CD4-positive, alpha-beta T cell (primary cell): ENCODE measurements at regions of chr9 and their contacts with region 1.

Region 1: DNA sequence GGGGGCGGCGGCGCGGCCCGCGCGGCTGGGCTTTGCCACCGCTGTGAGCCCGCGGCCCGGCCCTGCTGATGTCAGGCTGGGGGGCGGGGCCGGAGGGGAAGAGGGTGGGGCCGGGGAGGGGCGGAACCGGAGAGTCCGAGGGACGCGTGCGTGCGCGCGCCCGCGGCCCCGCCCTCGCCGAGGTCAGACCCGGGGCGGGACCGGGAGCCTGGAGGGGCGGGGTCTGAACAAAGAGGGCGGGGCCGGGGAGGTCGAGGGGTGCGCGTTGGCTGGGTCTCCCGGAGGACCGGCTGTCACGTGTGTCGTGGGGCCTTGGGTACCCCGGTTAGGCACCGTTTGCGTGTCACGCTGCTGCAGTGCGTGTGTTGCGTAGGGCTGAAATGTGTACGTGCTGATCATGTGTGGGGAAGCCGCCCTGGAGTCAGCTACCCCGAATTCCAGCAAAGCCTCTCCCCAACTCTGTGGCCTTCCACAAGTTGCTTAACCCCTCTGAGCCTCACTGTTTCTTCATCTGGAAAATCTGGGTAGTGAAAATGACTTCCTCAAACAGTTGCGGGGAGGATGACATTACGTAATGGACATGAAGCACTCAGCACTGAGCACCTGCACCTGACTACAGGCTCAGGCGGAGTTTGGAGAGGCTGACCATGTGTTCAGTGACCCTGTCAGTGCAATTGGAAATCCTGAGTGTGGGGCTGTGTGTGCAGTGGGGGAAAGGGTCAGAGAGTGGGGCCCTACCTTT is at the start of gene RALGDS:
- DNase-seq: peak; percentile 83 to 97 (median 90)
- ATAC-seq: peak; percentile 75
- H3K4me3 ChIP-seq: peak within 1 kb of the TSS; percentile 56
- H3K4me3 Mint-ChIP-seq: peak within 1 kb of the TSS; percentile 85
- H3K27ac ChIP-seq: peak within 1 kb of the TSS; percentile 75 to 98
- H3K27ac Mint-ChIP-seq: peak within 1 kb of the TSS; percentile 96
- H3K4me1 ChIP-seq: peaks cover 90% of the 10 kb centered on the region
- H3K4me1 Mint-ChIP-seq: peaks cover 61% of the 10 kb centered on the region
- H3K27me3 ChIP-seq: no peaks in the 10 kb centered on the region
- H3K27me3 Mint-ChIP-seq: no peaks in the 10 kb centered on the region
- CTCF ChIP-seq: no peak
- total RNA-seq, gene RALGDS: 166 to 168 TPM

Region 2: GRCh38 chr9:132354637-132355355 is 766.6 kb before region 1 on chr9 and contains the start of gene SETX:
- CTCF ChIA-PET with region 1: no interaction called
- POLR2A ChIA-PET with region 1: no interaction called
- intact Hi-C with region 1: loop called in 1 of 2 experiments (anchors 5 kb)
- DNase-seq: peak; percentile 88 to 99 (median 96)
- ATAC-seq: peak; percentile 82
- H3K4me3 ChIP-seq: peak within 1 kb of the TSS; percentile 74
- H3K4me3 Mint-ChIP-seq: peak within 1 kb of the TSS; percentile 94
- H3K27ac ChIP-seq: peak within 1 kb of the TSS; percentile 91 to 96
- H3K27ac Mint-ChIP-seq: peak within 1 kb of the TSS; percentile 91
- H3K4me1 ChIP-seq: peaks cover 41% of the 10 kb centered on the region
- H3K4me1 Mint-ChIP-seq: peaks cover 47% of the 10 kb centered on the region
- H3K27me3 ChIP-seq: no peaks in the 10 kb centered on the region
- H3K27me3 Mint-ChIP-seq: no peaks in the 10 kb centered on the region
- CTCF ChIP-seq: no peak
- total RNA-seq, gene SETX: 36.1 to 37.7 TPM

Region 3: DNA sequence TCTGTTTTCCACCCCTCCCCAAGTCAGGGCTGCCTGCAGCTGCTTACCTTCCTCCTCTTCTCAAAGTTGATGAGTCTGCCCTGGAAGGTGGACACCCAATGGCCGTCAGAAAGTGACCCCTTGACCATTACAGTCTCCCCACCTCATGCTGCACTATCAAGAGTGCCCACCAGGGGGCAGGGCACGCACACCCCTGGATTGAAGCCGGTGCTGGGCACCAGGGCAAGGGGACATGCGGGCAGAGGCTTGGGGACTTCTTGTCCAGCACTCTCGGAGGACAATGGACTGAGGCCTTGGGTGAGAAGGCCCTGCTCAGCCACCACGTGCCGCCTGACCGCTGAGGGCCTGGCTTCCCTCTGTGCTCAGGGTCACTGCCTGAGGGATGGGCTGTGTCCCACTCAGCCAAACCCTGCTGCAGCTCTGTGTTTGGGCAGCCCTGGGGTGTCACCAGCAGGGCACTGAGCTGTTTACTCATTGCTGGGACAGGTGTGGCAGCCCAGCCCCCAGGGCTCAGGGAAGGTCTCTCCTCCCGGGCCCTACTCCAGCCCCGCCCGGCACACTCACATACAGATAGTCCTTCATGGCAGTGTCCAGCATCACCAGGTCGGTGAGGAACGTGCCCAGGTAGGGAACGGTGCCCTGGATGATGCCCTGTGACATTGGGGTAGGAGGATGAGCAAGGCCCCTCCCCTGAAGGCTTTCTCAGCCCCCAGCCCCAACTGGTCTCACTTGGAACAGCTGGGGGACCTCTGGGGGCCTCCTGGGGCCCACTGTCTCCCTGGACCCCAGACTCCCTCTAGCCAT is 18.0 kb before region 1 on chr9:
- CTCF ChIA-PET with region 1: interaction called, 3 read pairs
- POLR2A ChIA-PET with region 1: interaction called, 3 read pairs
- intact Hi-C with region 1: loop called in 1 of 2 experiments (anchors 2 kb)
- DNase-seq: peak; percentile 38 to 76 (median 50)
- ATAC-seq: peak; percentile 50
- H3K4me3 ChIP-seq: no peak overlapping the region
- H3K4me3 Mint-ChIP-seq: peak overlapping the region; percentile 11
- H3K27ac ChIP-seq: peak overlapping the region in 1 of 2 donors; percentile 19
- H3K27ac Mint-ChIP-seq: peak overlapping the region; percentile 51
- H3K4me1 ChIP-seq: no peaks in the 10 kb centered on the region
- H3K4me1 Mint-ChIP-seq: no peaks in the 10 kb centered on the region
- H3K27me3 ChIP-seq: no peaks in the 10 kb centered on the region
- H3K27me3 Mint-ChIP-seq: no peaks in the 10 kb centered on the region
- CTCF ChIP-seq: peak; percentile 96

Region 4: GRCh38 chr9:133133681-133134418 is 12.5 kb after region 1 on chr9:
- CTCF ChIA-PET with region 1: interaction called, 3 read pairs
- POLR2A ChIA-PET with region 1: interaction called, 26 read pairs
- intact Hi-C with region 1: loop called (anchors 1 kb)
- DNase-seq: peak; percentile 83 to 98 (median 88)
- ATAC-seq: peak; percentile 80
- H3K4me3 ChIP-seq: peak overlapping the region; percentile 20
- H3K4me3 Mint-ChIP-seq: peak overlapping the region; percentile 87
- H3K27ac ChIP-seq: peak overlapping the region; percentile 98
- H3K27ac Mint-ChIP-seq: peak overlapping the region; percentile 99
- H3K4me1 ChIP-seq: peaks cover 100% of the 10 kb centered on the region
- H3K4me1 Mint-ChIP-seq: peaks cover 70% of the 10 kb centered on the region
- H3K27me3 ChIP-seq: no peaks in the 10 kb centered on the region
- H3K27me3 Mint-ChIP-seq: no peaks in the 10 kb centered on the region
- CTCF ChIP-seq: peak; percentile 9

Region 5: GRCh38 chr9:133347985-133348717 is 226.8 kb after region 1 on chr9 and contains the starts of genes MED22 and RPL7A:
- CTCF ChIA-PET with region 1: no interaction called
- POLR2A ChIA-PET with region 1: no interaction called
- intact Hi-C with region 1: no loop called
- DNase-seq: peak; percentile 83 to 97 (median 88)
- ATAC-seq: peak; percentile 90
- H3K4me3 ChIP-seq: peak within 1 kb of the TSS; percentile 88
- H3K4me3 Mint-ChIP-seq: peak within 1 kb of the TSS; percentile 96
- H3K27ac ChIP-seq: peak within 1 kb of the TSS; percentile 84 to 91
- H3K27ac Mint-ChIP-seq: peak within 1 kb of the TSS; percentile 85
- H3K4me1 ChIP-seq: peaks cover 50% of the 10 kb centered on the region
- H3K4me1 Mint-ChIP-seq: peaks cover 39% of the 10 kb centered on the region
- H3K27me3 ChIP-seq: no peaks in the 10 kb centered on the region
- H3K27me3 Mint-ChIP-seq: no peaks in the 10 kb centered on the region
- CTCF ChIP-seq: no peak
- total RNA-seq, gene MED22: 15.7 to 18.0 TPM
- total RNA-seq, gene RPL7A: 2,613 to 2,686 TPM